Endothelial cell of umbilical vein (primary cell): ENCODE measurements at regions of chr11 and their contacts with region 1.

Region 1: GRCh38 chr11:102346748-102347461 is at the start of gene BIRC2:
- DNase-seq: peak; percentile 91
- H3K4me3 ChIP-seq: peak within 1 kb of the TSS; percentile 69 to 99 (median 92)
- H3K27ac ChIP-seq: peak within 1 kb of the TSS; percentile 89
- H3K4me1 ChIP-seq: peaks cover 43% of the 10 kb centered on the region
- H3K27me3 ChIP-seq: no peaks in the 10 kb centered on the region
- CTCF ChIP-seq: peak; percentile 70 to 88
- POLR2A ChIP-seq: peak; percentile 90
- total RNA-seq, gene BIRC2: 47.3 and 49.9 TPM in 2 replicates

Region 2: GRCh38 chr11:101914738-101915426 is 432.0 kb before region 1 on chr11 and contains the start of gene CEP126:
- CTCF ChIA-PET with region 1: no interaction called
- POLR2A ChIA-PET with region 1: no interaction called
- dilution Hi-C with region 1: no loop called
- intact Hi-C with region 1: loop called (anchors 1 kb)
- DNase-seq: peak; percentile 99
- H3K4me3 ChIP-seq: peak within 1 kb of the TSS; percentile 13 to 81 (median 73)
- H3K27ac ChIP-seq: peak within 1 kb of the TSS; percentile 100
- H3K4me1 ChIP-seq: peaks cover 42% of the 10 kb centered on the region
- H3K27me3 ChIP-seq: no peaks in the 10 kb centered on the region
- CTCF ChIP-seq: peak; percentile 32 to 59
- POLR2A ChIP-seq: peak; percentile 79
- total RNA-seq, gene CEP126: 5.8 and 9.1 TPM in 2 replicates

Region 3: GRCh38 chr11:102119997-102120396 is 226.9 kb before region 1 on chr11:
- CTCF ChIA-PET with region 1: no interaction called
- POLR2A ChIA-PET with region 1: no interaction called
- dilution Hi-C with region 1: no loop called
- intact Hi-C with region 1: no loop called
- DNase-seq: no peak
- H3K4me3 ChIP-seq: no peak overlapping the region
- H3K27ac ChIP-seq: no peak overlapping the region
- H3K4me1 ChIP-seq: peaks cover 8% of the 10 kb centered on the region
- H3K27me3 ChIP-seq: peaks cover 6 to 36% of the 10 kb centered on the region in 2 experiments
- CTCF ChIP-seq: no peak
- POLR2A ChIP-seq: no peak

Region 4: GRCh38 chr11:102268329-102269193 is 78.3 kb before region 1 on chr11:
- CTCF ChIA-PET with region 1: no interaction called
- POLR2A ChIA-PET with region 1: no interaction called
- dilution Hi-C with region 1: no loop called
- intact Hi-C with region 1: no loop called
- DNase-seq: peak; percentile 51
- H3K4me3 ChIP-seq: peak overlapping the region; percentile 5 to 41 (median 7)
- H3K27ac ChIP-seq: no peak overlapping the region
- H3K4me1 ChIP-seq: peaks cover 6% of the 10 kb centered on the region
- H3K27me3 ChIP-seq: peaks cover 11 to 20% of the 10 kb centered on the region in 2 experiments
- CTCF ChIP-seq: peak in 1 of 2 donors; percentile 30
- POLR2A ChIP-seq: no peak

Region 5: GRCh38 chr11:102287964-102288724 is 58.8 kb before region 1 on chr11:
- CTCF ChIA-PET with region 1: interaction called, 32 read pairs
- POLR2A ChIA-PET with region 1: no interaction called
- dilution Hi-C with region 1: no loop called
- intact Hi-C with region 1: loop called (anchors 2 kb)
- DNase-seq: peak; percentile 66
- H3K4me3 ChIP-seq: no peak overlapping the region
- H3K27ac ChIP-seq: no peak overlapping the region
- H3K4me1 ChIP-seq: no peaks in the 10 kb centered on the region
- H3K27me3 ChIP-seq: no peaks in the 10 kb centered on the region
- CTCF ChIP-seq: peak; percentile 55 to 65
- POLR2A ChIP-seq: no peak

Region 6: GRCh38 chr11:102446606-102447005 is 99.7 kb after region 1 on chr11:
- CTCF ChIA-PET with region 1: interaction called, 4 read pairs
- POLR2A ChIA-PET with region 1: no interaction called
- dilution Hi-C with region 1: no loop called
- intact Hi-C with region 1: loop called (anchors 1 kb)
- DNase-seq: peak; percentile 70
- H3K4me3 ChIP-seq: no peak overlapping the region
- H3K27ac ChIP-seq: peak overlapping the region; percentile 91
- H3K4me1 ChIP-seq: peaks cover 53% of the 10 kb centered on the region
- H3K27me3 ChIP-seq: no peaks in the 10 kb centered on the region
- CTCF ChIP-seq: no peak
- POLR2A ChIP-seq: no peak

Region 7: DNA sequence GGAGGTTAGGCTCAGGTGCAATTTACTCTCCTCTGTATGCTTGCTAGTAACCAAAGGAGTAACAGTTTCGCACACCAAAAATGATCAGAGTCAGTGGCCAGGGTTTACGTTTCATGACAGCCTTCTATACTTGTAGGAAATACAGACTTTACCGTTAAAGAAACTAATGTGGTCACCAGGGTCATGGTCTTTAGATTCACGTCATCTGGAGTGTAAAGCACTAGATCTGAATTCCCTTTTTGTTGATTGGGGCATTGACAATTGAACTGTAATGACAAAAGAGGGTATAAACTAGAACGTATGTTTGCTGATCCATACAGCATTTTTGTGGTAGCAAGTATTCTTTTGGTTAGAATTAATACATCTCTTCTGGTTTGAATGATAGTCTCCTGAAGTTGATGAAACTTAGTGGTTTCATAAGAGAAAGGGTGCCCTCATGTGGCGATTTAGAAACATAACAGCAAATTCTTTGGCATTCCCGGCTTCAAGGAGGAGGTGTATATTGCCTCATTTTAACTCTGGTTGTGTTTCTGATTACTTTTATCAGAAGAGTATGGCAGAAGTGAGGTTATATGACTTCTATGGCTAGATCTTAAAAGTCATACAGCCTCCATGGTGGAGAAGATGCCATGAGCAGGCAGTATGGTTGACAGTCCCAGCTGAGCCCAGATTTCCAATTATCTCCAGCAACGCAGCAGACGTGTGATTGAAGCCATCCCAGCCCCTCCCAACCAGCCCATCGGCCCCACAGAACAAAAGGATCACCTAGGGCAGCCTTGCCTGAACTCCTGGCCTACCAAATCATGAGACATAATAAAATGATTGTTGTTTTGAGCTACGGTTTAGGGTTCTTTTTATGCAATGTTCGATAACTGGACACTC is 148.5 kb after region 1 on chr11:
- CTCF ChIA-PET with region 1: interaction called, 36 read pairs
- POLR2A ChIA-PET with region 1: no interaction called
- dilution Hi-C with region 1: no loop called
- intact Hi-C with region 1: loop called (anchors 1 kb)
- DNase-seq: peak; percentile 77
- H3K4me3 ChIP-seq: no peak overlapping the region
- H3K27ac ChIP-seq: no peak overlapping the region
- H3K4me1 ChIP-seq: peaks cover 13% of the 10 kb centered on the region
- H3K27me3 ChIP-seq: no peaks in the 10 kb centered on the region
- CTCF ChIP-seq: peak; percentile 30 to 51
- POLR2A ChIP-seq: no peak

Region 8: GRCh38 chr11:102530558-102530957 is 183.7 kb after region 1 on chr11 and contains the start of gene MMP7:
- CTCF ChIA-PET with region 1: no interaction called
- POLR2A ChIA-PET with region 1: no interaction called
- dilution Hi-C with region 1: no loop called
- intact Hi-C with region 1: no loop called
- DNase-seq: peak; percentile 89
- H3K4me3 ChIP-seq: peak within 1 kb of the TSS in 2 of 3 experiments; percentile 6 to 11
- H3K27ac ChIP-seq: peak within 1 kb of the TSS; percentile 37
- H3K4me1 ChIP-seq: peaks cover 14% of the 10 kb centered on the region
- H3K27me3 ChIP-seq: peaks cover 0 to 3% of the 10 kb centered on the region in 2 experiments
- CTCF ChIP-seq: no peak
- POLR2A ChIP-seq: no peak
- total RNA-seq, gene MMP7: 1.4 TPM in 1 of 2 replicates, not detected in the other

Region 9: GRCh38 chr11:102794447-102794781 is 447.5 kb after region 1 on chr11:
- CTCF ChIA-PET with region 1: no interaction called
- POLR2A ChIA-PET with region 1: no interaction called
- dilution Hi-C with region 1: no loop called
- intact Hi-C with region 1: loop called (anchors 5 kb)
- DNase-seq: peak; percentile 48
- H3K4me3 ChIP-seq: no peak overlapping the region
- H3K27ac ChIP-seq: no peak overlapping the region
- H3K4me1 ChIP-seq: peaks cover 17% of the 10 kb centered on the region
- H3K27me3 ChIP-seq: no peaks in the 10 kb centered on the region
- CTCF ChIP-seq: peak; percentile 60 to 66
- POLR2A ChIP-seq: no peak